ENCODE measurements at regions of chr16 and their contacts with region 1.

Region 1: GRCh38 chr16:8963825-8964441 is at the start of gene USP7:
- DNase-seq: peak; percentile 51 to 95
- H3K4me3 ChIP-seq: peak within 1 kb of the TSS; percentile 75 to 84
- H3K27ac ChIP-seq: peak within 1 kb of the TSS; percentile 75 to 78
- H3K4me1 ChIP-seq: peaks cover 15 to 31% of the 10 kb centered on the region in 2 donors
- H3K27me3 ChIP-seq: no peaks in the 10 kb centered on the region
- CTCF ChIP-seq: no peak
- total RNA-seq, gene USP7: 55.3 TPM

Region 2: GRCh38 chr16:8885674-8886592 is 78.0 kb before region 1 on chr16:
- intact Hi-C with region 1: loop called (anchors 5 kb)
- DNase-seq: no peak
- H3K4me3 ChIP-seq: no peak overlapping the region
- H3K27ac ChIP-seq: no peak overlapping the region
- H3K4me1 ChIP-seq: peaks cover 0 to 7% of the 10 kb centered on the region in 2 donors
- H3K27me3 ChIP-seq: no peaks in the 10 kb centered on the region
- CTCF ChIP-seq: no peak

Region 3: GRCh38 chr16:8989099-8989878 is 25.4 kb after region 1 on chr16:
- intact Hi-C with region 1: no loop called
- DNase-seq: no peak
- H3K4me3 ChIP-seq: no peak overlapping the region
- H3K27ac ChIP-seq: no peak overlapping the region
- H3K4me1 ChIP-seq: no peaks in the 10 kb centered on the region
- H3K27me3 ChIP-seq: no peaks in the 10 kb centered on the region
- CTCF ChIP-seq: no peak

Region 4: GRCh38 chr16:9047686-9048301 is 83.9 kb after region 1 on chr16:
- intact Hi-C with region 1: loop called (anchors 5 kb)
- DNase-seq: peak; percentile 93 to 97
- H3K4me3 ChIP-seq: no peak overlapping the region
- H3K27ac ChIP-seq: peak overlapping the region; percentile 77 to 80
- H3K4me1 ChIP-seq: peaks cover 3 to 11% of the 10 kb centered on the region in 2 donors
- H3K27me3 ChIP-seq: no peaks in the 10 kb centered on the region
- CTCF ChIP-seq: no peak

Measured in ascending aorta (tissue), 2 donors.